Activated CD4-positive, alpha-beta T cell treated with anti-CD3 and anti-CD28 coated beads for 36 hours (primary cell): ENCODE measurements at regions of chr19 and their contacts with region 1.

Region 1: DNA sequence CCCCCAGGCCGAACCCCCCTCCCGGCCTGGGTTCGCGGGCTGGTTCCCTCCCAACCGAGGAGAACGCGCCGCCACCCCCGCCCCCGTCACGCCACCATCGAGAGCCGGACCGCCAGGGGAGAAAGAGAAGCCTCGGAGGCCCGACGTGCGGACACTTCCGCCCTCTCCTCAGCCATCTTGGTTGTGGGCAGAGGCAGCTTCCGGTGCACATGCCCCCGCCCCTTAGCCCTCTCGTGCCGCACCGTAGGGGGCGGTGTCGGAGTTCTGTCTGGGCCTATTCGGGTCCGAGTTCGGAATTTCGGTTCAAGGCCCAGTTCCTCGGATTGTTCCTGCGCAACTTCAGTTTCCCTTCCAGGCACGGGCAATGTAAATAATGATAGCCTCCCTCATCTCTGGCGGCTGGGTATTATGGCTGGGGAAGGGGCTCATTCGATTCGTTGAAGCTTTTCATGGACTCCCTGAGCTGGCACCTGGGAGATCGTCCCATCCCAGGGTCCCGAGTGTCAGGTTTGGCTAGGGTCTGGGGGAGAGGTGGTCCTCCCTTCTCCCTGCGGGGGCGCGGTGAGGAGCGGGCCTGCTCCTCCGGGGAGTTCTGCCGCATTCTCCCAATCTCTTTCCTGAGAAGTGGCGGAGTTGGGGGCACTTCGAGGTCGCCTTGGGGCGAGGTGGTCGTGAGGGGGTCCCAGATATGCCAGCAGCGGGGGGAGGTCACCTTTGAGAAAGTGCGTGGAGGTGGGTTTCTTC is at the starts of genes IER2 and STX10:
- DNase-seq: peak; percentile 96
- ATAC-seq: peak; percentile 52
- H3K4me3 Mint-ChIP-seq: peak within 1 kb of the TSS; percentile 87
- H3K27ac Mint-ChIP-seq: peak within 1 kb of the TSS; percentile 97
- H3K4me1 Mint-ChIP-seq: peaks cover 18% of the 10 kb centered on the region
- H3K27me3 Mint-ChIP-seq: no peaks in the 10 kb centered on the region
- total RNA-seq, gene IER2: 109 to 118 TPM
- total RNA-seq, gene STX10: 64.8 to 71.4 TPM

Region 2: DNA sequence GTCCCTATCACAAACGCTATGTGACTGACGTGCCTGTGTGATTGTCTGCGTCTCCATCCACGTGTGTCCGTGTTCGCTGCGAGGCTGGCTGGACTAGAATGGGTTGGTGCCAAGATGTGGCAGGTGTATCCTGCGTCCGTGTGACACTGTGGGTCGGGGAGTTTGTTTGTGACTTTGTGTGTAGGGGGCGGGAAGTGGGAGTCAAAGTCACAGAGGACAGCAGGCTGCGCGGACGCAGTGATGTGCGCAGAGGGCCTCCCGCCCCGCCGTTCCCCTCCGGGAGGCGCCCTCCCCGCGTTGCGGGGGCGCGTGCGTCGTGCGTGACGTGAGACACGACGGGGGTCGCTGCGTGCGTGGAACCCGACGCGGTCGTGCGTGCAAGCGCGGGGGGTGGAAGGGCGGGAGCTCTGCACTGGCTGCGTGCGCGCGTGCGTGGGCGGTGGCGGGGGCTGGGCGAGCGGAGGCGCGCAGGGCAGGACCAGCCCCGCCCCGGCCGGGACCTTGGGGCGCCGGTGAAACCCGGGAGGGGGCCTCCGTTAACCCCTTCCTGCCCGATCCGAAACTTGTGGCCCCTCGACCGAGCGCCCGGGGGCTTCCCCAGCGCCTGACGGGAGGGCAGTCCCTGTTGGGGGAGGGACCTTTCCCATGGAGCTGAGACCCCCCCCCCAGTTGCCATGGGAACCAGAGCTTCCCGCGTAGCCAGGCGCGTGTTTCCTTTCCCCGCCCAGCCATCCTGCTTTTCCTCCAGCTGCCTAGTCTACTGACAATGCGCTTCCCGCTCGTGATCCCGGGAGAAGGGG is 367.9 kb before region 1 on chr19:
- CTCF ChIA-PET with region 1: no interaction called
- POLR2A ChIA-PET with region 1: no interaction called
- intact Hi-C with region 1: loop called in 1 of 2 experiments (anchors 2 kb)
- DNase-seq: peak; percentile 95
- ATAC-seq: peak; percentile 40
- H3K4me3 Mint-ChIP-seq: peak overlapping the region; percentile 74
- H3K27ac Mint-ChIP-seq: peak overlapping the region; percentile 98
- H3K4me1 Mint-ChIP-seq: peaks cover 33% of the 10 kb centered on the region
- H3K27me3 Mint-ChIP-seq: no peaks in the 10 kb centered on the region

Region 3: GRCh38 chr19:12945479-12946091 is 204.8 kb before region 1 on chr19 and contains the start of gene RAD23A:
- CTCF ChIA-PET with region 1: no interaction called
- POLR2A ChIA-PET with region 1: no interaction called
- intact Hi-C with region 1: loop called in 1 of 2 experiments (anchors 1 kb)
- DNase-seq: peak; percentile 100
- ATAC-seq: peak; percentile 81
- H3K4me3 Mint-ChIP-seq: peak within 1 kb of the TSS; percentile 88
- H3K27ac Mint-ChIP-seq: peak within 1 kb of the TSS; percentile 97
- H3K4me1 Mint-ChIP-seq: peaks cover 55% of the 10 kb centered on the region
- H3K27me3 Mint-ChIP-seq: no peaks in the 10 kb centered on the region
- total RNA-seq, gene RAD23A: 189 to 265 TPM

Region 4: DNA sequence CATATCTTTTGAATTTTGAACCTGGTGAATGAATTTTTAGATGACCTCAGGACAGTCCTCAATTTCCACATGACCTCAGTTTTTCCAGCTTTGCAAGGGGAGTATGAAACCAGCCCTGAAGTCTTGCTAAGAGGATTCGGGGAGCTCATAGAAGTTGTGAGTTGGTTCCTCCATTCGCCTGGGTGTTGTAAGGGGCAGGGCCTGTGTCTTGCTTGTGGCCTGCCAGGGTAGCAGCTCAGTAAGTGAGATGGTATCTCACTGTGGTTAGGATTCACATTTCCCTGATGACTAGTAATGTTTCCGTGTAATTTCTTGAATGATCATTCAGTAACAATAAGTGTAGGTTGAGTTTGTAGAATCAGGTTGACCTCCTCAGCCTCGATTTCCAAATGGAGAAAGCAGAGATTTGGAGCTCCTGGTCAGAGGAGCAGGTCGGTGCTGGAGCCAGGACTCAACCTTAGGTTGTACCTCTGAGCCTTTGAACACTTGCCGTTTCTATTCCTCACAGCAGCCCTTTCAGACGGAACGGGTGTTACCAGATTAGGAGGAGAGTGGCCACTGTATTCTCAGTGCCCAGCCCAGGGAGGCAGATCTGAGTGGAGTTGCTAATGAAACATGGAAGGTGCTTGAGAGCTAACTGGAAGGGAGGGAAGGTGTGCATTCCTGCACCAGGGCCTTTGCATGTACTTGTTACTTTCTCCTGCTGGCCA is 17.7 kb before region 1 on chr19:
- CTCF ChIA-PET with region 1: interaction called, 5 read pairs
- POLR2A ChIA-PET with region 1: interaction called, 10 read pairs
- intact Hi-C with region 1: loop called (anchors 1 kb)
- DNase-seq: peak; percentile 81
- ATAC-seq: peak; percentile 98
- H3K4me3 Mint-ChIP-seq: peak overlapping the region; percentile 43
- H3K27ac Mint-ChIP-seq: peak overlapping the region; percentile 93
- H3K4me1 Mint-ChIP-seq: peaks cover 41% of the 10 kb centered on the region
- H3K27me3 Mint-ChIP-seq: no peaks in the 10 kb centered on the region

Region 5: GRCh38 chr19:13262450-13262849 is 112.1 kb after region 1 on chr19:
- CTCF ChIA-PET with region 1: interaction called, 3 read pairs
- POLR2A ChIA-PET with region 1: no interaction called
- intact Hi-C with region 1: loop called in 1 of 2 experiments (anchors 2 kb)
- DNase-seq: no peak
- ATAC-seq: peak; percentile 40
- H3K4me3 Mint-ChIP-seq: no peak overlapping the region
- H3K27ac Mint-ChIP-seq: no peak overlapping the region
- H3K4me1 Mint-ChIP-seq: peaks cover 14% of the 10 kb centered on the region
- H3K27me3 Mint-ChIP-seq: peaks cover 17% of the 10 kb centered on the region

Region 6: DNA sequence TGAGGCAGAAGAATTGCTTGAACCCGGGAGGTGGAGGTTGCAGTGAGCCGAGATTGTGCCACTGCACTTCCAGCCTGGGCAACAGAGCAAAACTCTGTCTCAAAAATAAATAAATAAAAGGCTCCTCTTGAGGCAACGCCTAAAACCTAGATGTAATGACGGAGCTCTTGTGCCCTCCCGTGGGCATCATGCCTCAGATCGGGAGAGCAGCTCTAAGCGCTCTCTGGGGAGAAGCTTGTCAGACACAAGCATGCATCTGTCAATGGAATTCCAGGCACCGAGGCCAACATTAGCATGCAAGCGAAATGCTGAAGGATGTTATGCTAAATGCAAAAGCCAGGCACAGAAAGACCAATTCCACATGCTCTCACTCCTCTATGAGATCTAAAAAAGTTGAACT is 568.4 kb after region 1 on chr19:
- CTCF ChIA-PET with region 1: no interaction called
- POLR2A ChIA-PET with region 1: no interaction called
- intact Hi-C with region 1: no loop called
- DNase-seq: no peak
- ATAC-seq: no peak
- H3K4me3 Mint-ChIP-seq: no peak overlapping the region
- H3K27ac Mint-ChIP-seq: no peak overlapping the region
- H3K4me1 Mint-ChIP-seq: no peaks in the 10 kb centered on the region
- H3K27me3 Mint-ChIP-seq: peaks cover 9% of the 10 kb centered on the region

Region 7: DNA sequence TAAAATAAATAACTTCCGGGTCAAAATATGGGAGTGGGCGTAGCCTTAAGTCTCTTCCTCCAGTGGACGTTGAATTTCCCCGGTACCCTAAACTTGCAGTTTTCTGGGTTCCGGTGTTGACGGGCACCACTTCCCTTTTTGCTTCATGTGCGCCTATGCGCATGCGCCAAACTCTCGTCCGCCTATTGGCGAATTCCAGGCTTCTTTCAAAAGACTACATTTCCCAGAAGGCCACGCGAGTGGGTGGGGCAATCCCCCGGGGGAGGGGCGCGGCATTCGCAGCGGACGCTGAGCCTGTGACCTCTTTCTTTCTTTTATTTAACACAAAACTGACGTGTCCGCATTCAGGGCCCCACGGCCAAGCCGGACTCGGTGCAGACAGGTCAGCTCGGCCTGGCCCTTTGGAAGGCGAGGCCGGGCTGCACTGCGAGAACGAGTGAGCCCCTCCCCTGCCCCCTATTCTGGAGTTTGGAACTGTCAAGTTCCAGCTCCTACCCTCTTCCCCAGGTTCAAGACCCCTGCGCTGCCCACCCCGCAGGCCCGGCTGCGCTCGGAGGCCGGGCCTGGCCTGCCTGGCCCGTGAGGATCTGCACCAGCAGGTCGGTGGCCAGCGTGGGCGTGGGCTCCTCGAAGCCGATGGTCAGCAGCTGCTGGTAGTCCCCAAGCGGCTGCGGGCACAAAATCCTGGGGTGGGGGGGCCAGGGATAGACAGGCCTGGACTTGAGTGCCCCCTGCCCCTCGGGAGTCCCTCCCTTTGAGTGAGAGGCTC is 931.1 kb after region 1 on chr19:
- CTCF ChIA-PET with region 1: no interaction called
- POLR2A ChIA-PET with region 1: interaction called, 6 read pairs
- intact Hi-C with region 1: loop called in 1 of 2 experiments (anchors 1 kb)
- DNase-seq: peak; percentile 99
- ATAC-seq: peak; percentile 95
- H3K4me3 Mint-ChIP-seq: peak overlapping the region; percentile 90
- H3K27ac Mint-ChIP-seq: peak overlapping the region; percentile 92
- H3K4me1 Mint-ChIP-seq: peaks cover 10% of the 10 kb centered on the region
- H3K27me3 Mint-ChIP-seq: no peaks in the 10 kb centered on the region